Panc1 (cell line): ENCODE measurements at regions of chr2 and their contacts with region 1.

Region 1: GRCh38 chr2:25673300-25674076 is at the start of gene DTNB:
- DNase-seq: peak; percentile 32
- ATAC-seq: peak; percentile 88
- H3K4me3 ChIP-seq: peak within 1 kb of the TSS; percentile 77 to 90
- H3K27ac ChIP-seq: peak within 1 kb of the TSS; percentile 89
- H3K4me1 ChIP-seq: peaks cover 24% of the 10 kb centered on the region
- H3K27me3 ChIP-seq: no peaks in the 10 kb centered on the region
- CTCF ChIP-seq: no peak
- total RNA-seq, gene DTNB: 37.8 TPM

Region 2: GRCh38 chr2:25632396-25632795 is 41.1 kb before region 1 on chr2:
- CTCF ChIA-PET with region 1: no interaction called
- POLR2A ChIA-PET with region 1: interaction called, 12 read pairs
- in situ Hi-C with region 1: no loop called
- intact Hi-C with region 1: no loop called
- DNase-seq: no peak
- ATAC-seq: no peak
- H3K4me3 ChIP-seq: no peak overlapping the region
- H3K27ac ChIP-seq: no peak overlapping the region
- H3K4me1 ChIP-seq: no peaks in the 10 kb centered on the region
- H3K27me3 ChIP-seq: no peaks in the 10 kb centered on the region
- CTCF ChIP-seq: no peak

Region 3: GRCh38 chr2:25639171-25639570 is 34.3 kb before region 1 on chr2:
- CTCF ChIA-PET with region 1: no interaction called
- POLR2A ChIA-PET with region 1: interaction called, 10 read pairs
- in situ Hi-C with region 1: no loop called
- intact Hi-C with region 1: no loop called
- DNase-seq: no peak
- ATAC-seq: no peak
- H3K4me3 ChIP-seq: no peak overlapping the region
- H3K27ac ChIP-seq: no peak overlapping the region
- H3K4me1 ChIP-seq: no peaks in the 10 kb centered on the region
- H3K27me3 ChIP-seq: no peaks in the 10 kb centered on the region
- CTCF ChIP-seq: no peak

Region 4: GRCh38 chr2:25692143-25692542 is 18.7 kb after region 1 on chr2:
- CTCF ChIA-PET with region 1: no interaction called
- POLR2A ChIA-PET with region 1: no interaction called
- in situ Hi-C with region 1: no loop called
- intact Hi-C with region 1: no loop called
- DNase-seq: no peak
- ATAC-seq: peak; percentile 63; the same call in 1 of the 2 replicates
- H3K4me3 ChIP-seq: no peak overlapping the region
- H3K27ac ChIP-seq: no peak overlapping the region
- H3K4me1 ChIP-seq: no peaks in the 10 kb centered on the region
- H3K27me3 ChIP-seq: no peaks in the 10 kb centered on the region
- CTCF ChIP-seq: no peak